ENCODE measurements at regions of chr15 and their contacts with region 1.

Region 1: DNA sequence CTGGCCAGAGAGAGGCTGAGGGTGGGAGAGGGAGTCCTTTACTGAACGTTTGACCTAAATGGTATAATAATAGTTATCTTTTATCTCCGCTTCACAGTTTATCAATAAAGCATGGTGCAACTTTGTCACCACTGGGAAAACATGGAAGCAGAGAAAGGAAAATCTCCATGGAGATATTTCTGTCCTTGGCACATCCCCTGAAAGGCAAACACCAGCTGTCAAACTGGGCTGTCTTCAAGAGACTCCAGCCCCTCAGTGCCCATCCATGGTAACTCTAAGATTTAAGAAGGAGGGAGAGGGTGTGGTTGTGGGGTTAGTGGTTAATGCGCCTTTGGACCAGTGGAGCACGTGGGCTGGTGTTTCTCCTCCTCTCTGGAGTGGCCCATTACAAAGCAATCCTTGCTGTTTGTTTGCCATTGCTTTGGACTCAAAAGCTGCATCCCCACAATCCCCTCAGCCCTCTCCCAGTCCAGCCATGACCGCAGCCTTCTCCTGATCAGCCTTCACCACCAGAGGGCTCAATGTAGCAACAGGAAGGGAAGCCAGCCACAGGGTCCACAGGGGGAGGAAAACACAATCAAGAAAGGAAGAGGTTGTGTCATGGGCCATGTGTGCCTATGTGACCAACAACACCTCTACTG is 38.2 kb upstream of the FAM174B start:
- DNase-seq: peak in 1 of 2 experiments; percentile 80
- H3K4me3 ChIP-seq: no peak overlapping the region
- H3K27ac ChIP-seq: no peak overlapping the region
- H3K4me1 ChIP-seq: no peaks in the 10 kb centered on the region
- H3K27me3 ChIP-seq: no peaks in the 10 kb centered on the region
- CTCF ChIP-seq: peak; percentile 79 to 86 (median 86)
- EP300 ChIP-seq: no peak
- POLR2A ChIP-seq: no peak
- RAD21 ChIP-seq: peak; percentile 69 to 82

Region 2: GRCh38 chr15:92709110-92709790 is 15.4 kb after region 1 on chr15:
- CTCF ChIA-PET with region 1: interaction called, 67 read pairs
- POLR2A ChIA-PET with region 1: no interaction called
- DNase-seq: no peak
- H3K4me3 ChIP-seq: no peak overlapping the region
- H3K27ac ChIP-seq: no peak overlapping the region
- H3K4me1 ChIP-seq: peaks cover 0 to 6% (median 3%) of the 10 kb centered on the region in 4 experiments; a peak in 4 of 7 replicates
- H3K27me3 ChIP-seq: peaks cover 0 to 27% (median 13%) of the 10 kb centered on the region in 4 experiments; a peak in 6 of 7 replicates
- CTCF ChIP-seq: no peak
- EP300 ChIP-seq: no peak
- POLR2A ChIP-seq: no peak
- RAD21 ChIP-seq: no peak

Region 3: GRCh38 chr15:92714477-92715401 is 20.9 kb after region 1 on chr15:
- CTCF ChIA-PET with region 1: interaction called, 67 read pairs
- POLR2A ChIA-PET with region 1: no interaction called
- DNase-seq: peak in 1 of 2 experiments; percentile 92
- H3K4me3 ChIP-seq: peak overlapping the region; percentile 51 to 72 (median 62)
- H3K27ac ChIP-seq: no peak overlapping the region
- H3K4me1 ChIP-seq: peaks cover 0 to 5% (median 3%) of the 10 kb centered on the region in 4 experiments; a peak in 4 of 7 replicates
- H3K27me3 ChIP-seq: peaks cover 0 to 31% (median 14%) of the 10 kb centered on the region in 4 experiments; a peak in 6 of 7 replicates
- CTCF ChIP-seq: peak; percentile 52 to 83 (median 75)
- EP300 ChIP-seq: no peak
- POLR2A ChIP-seq: peak in 1 of 2 experiments; percentile 38; a peak in 2 of 3 replicates
- RAD21 ChIP-seq: peak; percentile 93 to 96